Vagina (tissue), 2 donors: ENCODE measurements at regions of chr11 and their contacts with region 1.

Region 1: GRCh38 chr11:128095466-128095981 is 491.8 kb downstream of the ETS1 start:
- DNase-seq: no peak
- H3K4me3 ChIP-seq: no peak overlapping the region
- H3K27ac ChIP-seq: no peak overlapping the region
- H3K4me1 ChIP-seq: no peaks in the 10 kb centered on the region
- H3K27me3 ChIP-seq: no peaks in the 10 kb centered on the region
- CTCF ChIP-seq: no peak
- POLR2A ChIP-seq: no peak

Region 2: DNA sequence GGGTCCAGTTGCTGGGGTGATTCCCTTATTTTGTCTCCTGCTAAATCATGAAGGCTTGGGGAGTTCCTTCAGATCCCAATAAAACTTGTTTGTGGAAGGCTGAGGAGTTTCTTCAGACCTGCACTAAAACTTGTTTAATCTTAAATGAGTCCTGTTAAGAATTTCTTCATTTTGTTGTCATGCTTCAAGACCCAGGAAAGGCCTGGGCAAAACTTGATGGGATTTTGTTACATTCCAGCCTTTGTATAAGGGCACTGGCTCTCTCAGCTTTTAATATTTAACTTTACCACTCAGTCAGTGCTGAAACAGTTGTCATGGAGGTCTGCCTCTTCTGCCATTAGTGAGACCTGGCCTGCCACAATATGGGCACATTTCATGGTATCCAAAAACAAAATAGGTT is 207.1 kb before region 1 on chr11:
- intact Hi-C with region 1: loop called (anchors 10 kb)
- DNase-seq: no peak
- H3K4me3 ChIP-seq: no peak overlapping the region
- H3K27ac ChIP-seq: no peak overlapping the region
- H3K4me1 ChIP-seq: no peaks in the 10 kb centered on the region
- H3K27me3 ChIP-seq: no peaks in the 10 kb centered on the region
- CTCF ChIP-seq: no peak
- POLR2A ChIP-seq: no peak

Region 3: GRCh38 chr11:128157423-128158298 is 62.1 kb after region 1 on chr11:
- intact Hi-C with region 1: no loop called
- DNase-seq: no peak
- H3K4me3 ChIP-seq: no peak overlapping the region
- H3K27ac ChIP-seq: no peak overlapping the region
- H3K4me1 ChIP-seq: no peaks in the 10 kb centered on the region
- H3K27me3 ChIP-seq: no peaks in the 10 kb centered on the region
- CTCF ChIP-seq: peak; percentile 74 to 88 (median 82)
- POLR2A ChIP-seq: no peak